ENCODE measurements at regions of chr1 and their contacts with region 1.

Region 1: GRCh38 chr1:110338886-110339406 is at the start of gene RBM15:
- DNase-seq: peak; percentile 100
- H3K4me3 ChIP-seq: peak within 1 kb of the TSS; percentile 88 to 99 (median 92)
- H3K4me3 Mint-ChIP-seq: no peak within 1 kb of the TSS
- H3K27ac ChIP-seq: peak within 1 kb of the TSS; percentile 94 to 99
- H3K27ac Mint-ChIP-seq: no peak within 1 kb of the TSS
- H3K4me1 ChIP-seq: peaks cover 35 to 54% of the 10 kb centered on the region in 2 donors
- H3K4me1 Mint-ChIP-seq: peaks cover 52% of the 10 kb centered on the region
- H3K27me3 ChIP-seq: no peaks in the 10 kb centered on the region
- H3K27me3 Mint-ChIP-seq: peaks cover 0 to 1% (median 0%) of the 10 kb centered on the region in 3 donors
- CTCF ChIP-seq: no peak
- polyA plus RNA-seq, gene RBM15: 6.7 to 16.8 (median 7.5) TPM

Region 2: DNA sequence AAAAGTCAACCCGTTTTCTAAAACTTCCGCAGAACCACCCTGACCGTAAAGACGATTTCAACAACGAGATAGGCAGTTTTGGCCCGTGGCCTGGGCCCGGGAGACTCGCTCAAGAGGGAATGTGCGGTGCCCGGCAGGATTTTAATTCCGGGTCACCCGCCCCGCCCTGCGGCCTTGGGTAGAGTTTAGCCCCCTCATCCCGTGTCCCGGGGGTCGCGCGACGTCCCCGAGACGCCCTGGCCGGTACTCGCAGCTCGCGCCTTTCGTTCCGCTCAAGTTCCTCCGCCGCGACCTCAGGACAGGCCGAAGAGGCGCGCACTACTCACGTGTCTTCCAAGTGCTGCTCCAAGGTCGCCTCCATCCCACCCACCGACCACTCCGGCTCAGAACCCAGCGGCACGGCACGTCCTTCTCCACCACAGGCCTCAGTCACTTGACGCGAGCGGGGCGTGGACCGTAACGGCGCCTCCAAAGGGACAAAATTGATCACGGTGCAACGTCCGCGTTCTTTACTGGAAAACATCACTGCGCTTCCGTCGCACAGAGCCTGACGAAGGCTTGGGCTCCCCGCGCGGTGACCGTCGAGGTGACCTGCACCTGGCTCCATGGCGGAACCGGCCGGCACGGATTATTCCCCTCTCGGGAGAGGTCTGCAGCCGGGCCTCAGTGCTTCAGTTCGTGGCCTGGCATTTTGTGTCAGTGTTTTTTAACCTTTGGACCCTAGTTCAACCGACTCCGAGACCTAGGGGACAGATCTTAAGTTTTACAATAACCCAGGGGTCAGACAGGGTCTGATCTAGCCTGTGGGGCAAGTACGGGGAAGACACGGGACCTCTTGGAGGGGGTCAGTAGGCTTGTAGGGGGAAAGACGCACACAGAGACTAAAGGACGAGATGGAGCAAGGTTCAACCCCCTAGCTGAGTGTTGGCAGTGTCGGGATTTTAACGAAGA is 68.6 kb after region 1 on chr1 and contains the start of gene LAMTOR5:
- intact Hi-C with region 1: loop called (anchors 2 to 5 kb)
- DNase-seq: peak; percentile 84 to 92 (median 88)
- H3K4me3 ChIP-seq: peak within 1 kb of the TSS; percentile 85 to 98 (median 95)
- H3K4me3 Mint-ChIP-seq: peak within 1 kb of the TSS; percentile 100
- H3K27ac ChIP-seq: peak within 1 kb of the TSS; percentile 90 to 98
- H3K27ac Mint-ChIP-seq: peak within 1 kb of the TSS; percentile 98 to 100 (median 100)
- H3K4me1 ChIP-seq: peaks cover 15 to 24% of the 10 kb centered on the region in 2 donors
- H3K4me1 Mint-ChIP-seq: peaks cover 21% of the 10 kb centered on the region
- H3K27me3 ChIP-seq: no peaks in the 10 kb centered on the region
- H3K27me3 Mint-ChIP-seq: peaks cover 0 to 7% (median 3%) of the 10 kb centered on the region in 3 donors
- CTCF ChIP-seq: no peak
- polyA plus RNA-seq, gene LAMTOR5: 304 to 420 (median 368) TPM